B cell (primary cell): ENCODE measurements at regions of chr1 and their contacts with region 1.

Region 1: GRCh38 chr1:20732588-20733360 is at the start of gene SH2D5:
- DNase-seq: peak; percentile 84
- ATAC-seq: peak; percentile 70
- H3K4me3 ChIP-seq: peak within 1 kb of the TSS; percentile 22 to 70 (median 60)
- H3K4me3 Mint-ChIP-seq: peak within 1 kb of the TSS; percentile 94
- H3K27ac ChIP-seq: no peak within 1 kb of the TSS
- H3K27ac Mint-ChIP-seq: peak within 1 kb of the TSS; percentile 86
- H3K4me1 ChIP-seq: peaks cover 27 to 30% of the 10 kb centered on the region in 2 donors
- H3K4me1 Mint-ChIP-seq: peaks cover 19% of the 10 kb centered on the region
- H3K27me3 ChIP-seq: peaks cover 0 to 35% (median 13%) of the 10 kb centered on the region in 4 experiments
- H3K27me3 Mint-ChIP-seq: peaks cover 13% of the 10 kb centered on the region
- CTCF ChIP-seq: peak; percentile 62
- total RNA-seq, gene SH2D5: 0.29 and 0.30 TPM in 2 replicates

Region 2: DNA sequence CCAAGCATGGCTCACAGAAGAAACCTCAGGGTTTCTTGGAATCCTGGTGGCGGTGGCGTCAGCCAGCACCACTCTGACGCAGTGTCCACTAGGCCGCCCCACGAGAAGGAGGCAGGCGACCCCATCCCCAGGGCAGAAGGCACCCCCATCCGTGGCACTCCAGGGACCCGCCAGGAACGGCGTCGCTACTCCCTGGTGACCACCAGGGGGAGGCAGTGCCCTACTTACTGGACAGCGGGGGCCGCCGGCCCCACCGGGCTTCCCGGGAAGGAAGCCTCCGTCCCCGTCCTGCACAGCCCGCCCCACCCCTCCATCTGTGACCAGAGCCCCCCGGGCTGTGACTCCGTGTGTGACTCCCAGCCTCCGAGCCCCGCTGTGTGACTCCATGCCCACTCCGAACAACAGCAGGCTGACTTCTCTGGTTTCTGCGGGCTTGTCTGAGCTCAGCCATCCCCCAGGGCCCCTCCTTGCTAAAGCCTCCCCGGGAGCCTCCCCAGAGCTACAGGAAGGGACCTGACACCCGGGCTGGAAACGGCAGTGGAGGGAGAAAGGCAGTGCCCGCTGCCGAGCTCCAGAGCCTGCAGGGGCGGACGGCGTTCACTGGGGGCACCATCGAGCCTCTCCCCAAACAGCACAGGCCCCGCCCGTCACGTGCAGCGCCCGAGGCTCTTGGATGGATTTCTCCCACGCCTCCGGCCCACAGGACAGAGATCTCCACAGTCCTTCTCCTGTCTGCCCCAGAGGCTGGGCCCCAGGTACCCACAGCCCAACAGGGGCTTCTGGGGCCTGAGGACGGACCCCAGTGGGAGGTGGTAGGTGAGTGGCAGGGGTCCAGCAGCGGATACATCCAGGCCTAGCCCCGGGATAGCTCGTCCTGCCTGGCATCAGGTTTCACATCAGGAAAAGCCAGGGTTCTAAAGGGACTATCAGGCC is 36.1 kb before region 1 on chr1:
- CTCF ChIA-PET with region 1: interaction called, 9 read pairs
- POLR2A ChIA-PET with region 1: interaction called, 9 read pairs
- intact Hi-C with region 1: loop called (anchors 1 kb)
- DNase-seq: peak; percentile 83
- ATAC-seq: peak; percentile 94
- H3K4me3 ChIP-seq: peak overlapping the region; percentile 42 to 82 (median 79)
- H3K4me3 Mint-ChIP-seq: peak overlapping the region; percentile 91
- H3K27ac ChIP-seq: no peak overlapping the region
- H3K27ac Mint-ChIP-seq: no peak overlapping the region
- H3K4me1 ChIP-seq: peaks cover 0 to 8% of the 10 kb centered on the region in 2 donors
- H3K4me1 Mint-ChIP-seq: peaks cover 4% of the 10 kb centered on the region
- H3K27me3 ChIP-seq: no peaks in the 10 kb centered on the region
- H3K27me3 Mint-ChIP-seq: no peaks in the 10 kb centered on the region
- CTCF ChIP-seq: peak; percentile 98

Region 3: GRCh38 chr1:20717452-20718342 is 15.1 kb before region 1 on chr1 and contains the start of gene KIF17:
- CTCF ChIA-PET with region 1: no interaction called
- POLR2A ChIA-PET with region 1: no interaction called
- intact Hi-C with region 1: no loop called
- DNase-seq: peak; percentile 89
- ATAC-seq: peak; percentile 79
- H3K4me3 ChIP-seq: peak within 1 kb of the TSS in 4 of 5 experiments; percentile 21 to 52 (median 38)
- H3K4me3 Mint-ChIP-seq: peak within 1 kb of the TSS; percentile 79
- H3K27ac ChIP-seq: no peak within 1 kb of the TSS
- H3K27ac Mint-ChIP-seq: peak within 1 kb of the TSS; percentile 67
- H3K4me1 ChIP-seq: peaks cover 7 to 9% of the 10 kb centered on the region in 2 donors
- H3K4me1 Mint-ChIP-seq: peaks cover 10% of the 10 kb centered on the region
- H3K27me3 ChIP-seq: peaks cover 0 to 41% (median 13%) of the 10 kb centered on the region in 4 experiments
- H3K27me3 Mint-ChIP-seq: peaks cover 21% of the 10 kb centered on the region
- CTCF ChIP-seq: no peak
- total RNA-seq, gene KIF17: not detected in 2 replicates